Activated T-helper 1 cell treated with anti-CD3 and anti-CD28 coated beads, Interleukin-12 subunit alpha, Interleukin-12 subunit beta, Interleukin-2, Interleukin-4 antibody, amounts not matched to agents 30 ng/mL and 10 ng/mL and 1 ng/mL, durations not matched to agents 14 hours and 24 hours and 36 hours (primary cell): ENCODE measurements at regions of chr22 and their contacts with region 1.

Region 1: DNA sequence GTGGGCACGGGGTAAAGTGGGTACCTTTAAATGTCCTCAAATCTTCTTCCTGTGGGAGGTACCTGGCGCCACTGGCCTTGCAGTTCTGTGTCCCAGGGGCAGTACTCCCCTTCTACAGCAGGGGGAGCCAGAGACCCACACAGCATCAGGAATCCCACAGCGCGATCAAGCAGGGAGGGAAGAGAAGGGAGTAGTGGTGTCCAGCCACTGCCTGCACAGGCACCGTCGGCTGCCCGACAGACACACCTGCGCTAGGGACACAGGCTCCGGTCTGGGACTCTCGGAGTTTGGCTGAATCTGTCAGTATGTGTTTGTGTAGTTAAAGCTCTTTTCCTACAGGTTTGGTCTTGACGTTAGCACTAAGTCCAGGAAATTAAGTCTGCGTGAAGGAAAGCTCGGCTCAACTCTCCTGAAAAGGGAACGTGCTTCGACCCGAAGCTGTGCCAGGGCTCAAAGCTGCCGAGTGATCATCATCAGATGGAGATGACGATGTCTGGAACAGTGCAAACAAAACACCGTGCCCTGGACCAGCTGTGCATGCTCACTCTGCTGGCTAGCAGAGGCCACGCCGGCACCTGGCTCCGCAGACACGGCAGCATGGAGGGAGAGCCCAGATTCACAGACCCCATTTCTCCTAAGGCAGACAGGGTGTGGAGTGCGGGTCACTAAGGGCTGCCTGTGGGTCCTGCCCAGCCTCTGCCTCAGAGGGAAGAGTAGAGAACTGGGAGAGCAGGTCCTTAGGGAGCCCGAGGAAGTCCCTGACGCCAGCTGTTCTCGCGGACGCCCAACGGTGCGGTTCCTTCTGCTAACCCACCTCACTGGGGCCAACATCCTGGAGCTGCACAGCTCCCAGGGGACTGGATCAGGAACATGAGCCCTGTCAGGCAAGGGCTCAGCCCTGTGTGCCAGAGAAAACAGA is 56.0 kb upstream of the BID start:
- DNase-seq: peak; percentile 70
- H3K4me3 Mint-ChIP-seq: no peak overlapping the region
- H3K27ac Mint-ChIP-seq: no peak overlapping the region
- H3K4me1 Mint-ChIP-seq: peaks cover 5% of the 10 kb centered on the region
- H3K27me3 Mint-ChIP-seq: no peaks in the 10 kb centered on the region

Region 2: GRCh38 chr22:17436382-17436980 is 393.8 kb before region 1 on chr22:
- intact Hi-C with region 1: no loop called
- DNase-seq: no peak
- H3K4me3 Mint-ChIP-seq: no peak overlapping the region
- H3K27ac Mint-ChIP-seq: no peak overlapping the region
- H3K4me1 Mint-ChIP-seq: no peaks in the 10 kb centered on the region
- H3K27me3 Mint-ChIP-seq: peaks cover 15% of the 10 kb centered on the region

Region 3: DNA sequence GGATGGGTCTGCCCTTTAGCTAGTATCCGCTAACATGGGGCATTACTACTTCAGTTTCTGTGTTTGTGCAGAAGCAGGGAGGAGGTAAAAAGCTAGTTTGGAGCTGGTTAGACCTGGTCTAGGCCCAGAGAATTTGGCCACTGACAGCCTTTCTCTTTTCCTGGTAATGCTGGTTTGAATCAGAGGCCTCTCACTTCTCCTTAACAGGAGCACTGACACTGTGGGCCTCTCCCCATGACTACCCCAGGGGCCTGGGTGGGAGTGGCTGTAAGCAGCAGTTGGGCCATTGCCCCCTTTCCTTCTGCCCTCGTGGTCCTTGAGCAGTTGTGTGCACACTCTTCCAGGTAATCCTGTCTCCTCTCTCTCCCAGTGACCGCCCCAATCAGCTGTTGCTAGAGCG is 275.5 kb before region 1 on chr22:
- intact Hi-C with region 1: no loop called
- DNase-seq: no peak
- H3K4me3 Mint-ChIP-seq: no peak overlapping the region
- H3K27ac Mint-ChIP-seq: no peak overlapping the region
- H3K4me1 Mint-ChIP-seq: no peaks in the 10 kb centered on the region
- H3K27me3 Mint-ChIP-seq: peaks cover 9% of the 10 kb centered on the region

Region 4: DNA sequence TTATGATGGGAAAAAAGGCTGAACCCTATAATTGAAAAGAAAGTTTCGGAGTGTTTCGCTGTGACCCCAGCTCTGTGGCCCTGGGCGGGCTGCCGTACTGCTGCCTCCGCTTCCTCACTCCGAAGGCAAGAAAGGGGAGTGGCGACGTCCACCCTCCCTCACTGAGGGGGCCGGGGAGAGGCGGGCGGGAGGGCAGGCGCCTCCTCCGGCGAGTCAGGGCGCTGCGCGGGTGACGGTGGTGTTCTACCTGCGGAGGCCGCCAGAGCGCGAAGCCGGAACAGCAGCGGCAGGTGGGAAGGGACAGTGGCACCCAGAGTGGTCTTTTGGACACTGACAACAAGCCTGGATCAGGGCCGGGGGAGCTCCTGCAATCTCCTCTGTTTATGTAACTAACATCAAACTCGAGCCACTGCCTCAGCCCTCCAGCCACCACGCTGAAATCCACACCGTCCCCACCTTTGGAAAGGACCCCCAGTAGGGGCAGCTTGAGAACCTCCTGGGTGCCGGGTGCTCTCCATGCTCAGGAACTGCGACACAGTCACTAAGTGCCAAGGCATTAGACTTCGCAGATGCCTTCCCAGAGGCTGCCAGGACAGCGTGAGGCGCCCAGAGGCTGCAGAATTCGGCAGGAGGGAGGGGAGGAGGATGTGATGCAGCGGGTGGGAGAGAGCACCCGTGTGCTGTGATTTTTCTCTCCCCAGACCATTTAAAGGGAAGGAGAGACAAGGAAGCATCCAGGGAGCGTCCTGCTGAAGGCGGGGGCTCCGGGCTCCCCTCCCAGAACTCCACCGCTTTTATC is 81.5 kb before region 1 on chr22:
- intact Hi-C with region 1: loop called (anchors 2 kb)
- DNase-seq: no peak
- H3K4me3 Mint-ChIP-seq: no peak overlapping the region
- H3K27ac Mint-ChIP-seq: no peak overlapping the region
- H3K4me1 Mint-ChIP-seq: no peaks in the 10 kb centered on the region
- H3K27me3 Mint-ChIP-seq: no peaks in the 10 kb centered on the region

Region 5: DNA sequence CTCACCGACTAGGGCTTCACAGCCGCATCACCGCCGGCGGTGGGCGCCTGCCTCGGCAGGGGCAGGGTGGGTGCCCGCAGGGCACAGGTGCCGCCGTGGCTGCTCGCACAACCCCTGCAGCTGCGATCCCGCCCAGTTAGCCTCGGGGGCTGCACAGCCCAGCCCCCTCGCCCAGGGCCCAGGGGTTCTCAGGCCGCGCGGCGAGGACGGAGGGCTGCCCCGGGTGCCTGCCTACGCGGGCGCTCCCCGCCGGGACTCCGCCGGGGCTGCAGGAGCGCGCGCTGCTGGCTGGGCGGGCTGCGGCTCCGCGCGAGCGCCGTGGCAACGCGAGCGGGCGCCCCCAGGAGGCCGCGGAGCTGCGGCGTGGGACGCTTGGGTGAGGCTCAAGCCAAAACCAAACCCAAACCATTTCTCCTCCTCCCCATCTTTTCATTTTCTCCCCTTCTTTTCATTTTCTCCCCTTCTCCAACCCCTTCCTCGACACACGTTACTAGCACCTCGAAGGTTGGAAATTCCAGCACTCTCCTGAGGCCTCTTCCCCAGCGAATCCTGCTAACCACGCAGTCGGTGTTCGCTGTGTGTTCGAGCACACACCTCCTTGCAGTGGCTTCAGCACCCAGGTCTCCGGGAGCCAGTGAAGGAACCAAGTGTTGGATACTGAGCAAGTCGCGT is 194.1 kb after region 1 on chr22 and contains the start of gene MICAL3:
- intact Hi-C with region 1: loop called (anchors 1 kb)
- DNase-seq: peak; percentile 67
- H3K4me3 Mint-ChIP-seq: peak within 1 kb of the TSS; percentile 87
- H3K27ac Mint-ChIP-seq: peak within 1 kb of the TSS; percentile 72
- H3K4me1 Mint-ChIP-seq: peaks cover 18% of the 10 kb centered on the region
- H3K27me3 Mint-ChIP-seq: peaks cover 59% of the 10 kb centered on the region
- total RNA-seq, gene MICAL3: 47.8 and 50.6 TPM in 2 replicates